ENCODE measurements at regions of chr2 and their contacts with region 1.

Region 1: DNA sequence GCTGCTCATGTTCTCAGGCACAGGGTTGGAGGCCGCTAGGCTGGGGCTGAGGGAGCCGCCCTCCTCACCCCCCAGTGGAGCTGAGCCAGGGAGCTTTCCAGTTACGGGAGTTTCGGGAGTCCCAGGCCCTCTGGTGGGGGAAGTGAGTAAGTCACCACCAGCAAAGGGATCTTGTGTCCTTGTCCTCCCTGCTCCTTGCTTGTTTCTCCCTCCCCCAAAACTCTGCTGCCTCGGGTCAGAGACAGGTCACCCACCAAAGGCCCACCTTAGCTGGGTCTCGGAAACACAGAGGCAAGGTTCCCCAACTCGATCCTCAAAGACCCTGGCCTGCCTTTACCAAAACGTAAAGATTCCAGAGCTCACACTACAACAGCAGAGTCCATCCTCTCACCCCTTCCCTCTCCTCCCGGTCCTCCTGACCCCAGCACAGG is 60.5 kb upstream of the POMC start:
- DNase-seq: peak; percentile 79
- ATAC-seq: peak; percentile 74
- H3K4me3 ChIP-seq: no peak overlapping the region
- H3K4me3 Mint-ChIP-seq: no peak overlapping the region
- H3K27ac ChIP-seq: no peak overlapping the region
- H3K27ac Mint-ChIP-seq: peak overlapping the region; percentile 15
- H3K4me1 ChIP-seq: peaks cover 7 to 14% of the 10 kb centered on the region in 2 donors
- H3K4me1 Mint-ChIP-seq: peaks cover 19% of the 10 kb centered on the region
- H3K27me3 ChIP-seq: no peaks in the 10 kb centered on the region
- H3K27me3 Mint-ChIP-seq: no peaks in the 10 kb centered on the region
- CTCF ChIP-seq: peak; percentile 63

Region 2: GRCh38 chr2:25197336-25198208 is 31.3 kb before region 1 on chr2:
- CTCF ChIA-PET with region 1: interaction called, 28 read pairs
- POLR2A ChIA-PET with region 1: no interaction called
- intact Hi-C with region 1: loop called (anchors 2 kb)
- DNase-seq: no peak
- ATAC-seq: no peak
- H3K4me3 ChIP-seq: no peak overlapping the region
- H3K4me3 Mint-ChIP-seq: no peak overlapping the region
- H3K27ac ChIP-seq: no peak overlapping the region
- H3K27ac Mint-ChIP-seq: no peak overlapping the region
- H3K4me1 ChIP-seq: peaks cover 6 to 14% of the 10 kb centered on the region in 2 donors
- H3K4me1 Mint-ChIP-seq: peaks cover 14% of the 10 kb centered on the region
- H3K27me3 ChIP-seq: peaks cover 0 to 6% (median 1%) of the 10 kb centered on the region in 4 experiments
- H3K27me3 Mint-ChIP-seq: no peaks in the 10 kb centered on the region
- CTCF ChIP-seq: no peak

Region 3: DNA sequence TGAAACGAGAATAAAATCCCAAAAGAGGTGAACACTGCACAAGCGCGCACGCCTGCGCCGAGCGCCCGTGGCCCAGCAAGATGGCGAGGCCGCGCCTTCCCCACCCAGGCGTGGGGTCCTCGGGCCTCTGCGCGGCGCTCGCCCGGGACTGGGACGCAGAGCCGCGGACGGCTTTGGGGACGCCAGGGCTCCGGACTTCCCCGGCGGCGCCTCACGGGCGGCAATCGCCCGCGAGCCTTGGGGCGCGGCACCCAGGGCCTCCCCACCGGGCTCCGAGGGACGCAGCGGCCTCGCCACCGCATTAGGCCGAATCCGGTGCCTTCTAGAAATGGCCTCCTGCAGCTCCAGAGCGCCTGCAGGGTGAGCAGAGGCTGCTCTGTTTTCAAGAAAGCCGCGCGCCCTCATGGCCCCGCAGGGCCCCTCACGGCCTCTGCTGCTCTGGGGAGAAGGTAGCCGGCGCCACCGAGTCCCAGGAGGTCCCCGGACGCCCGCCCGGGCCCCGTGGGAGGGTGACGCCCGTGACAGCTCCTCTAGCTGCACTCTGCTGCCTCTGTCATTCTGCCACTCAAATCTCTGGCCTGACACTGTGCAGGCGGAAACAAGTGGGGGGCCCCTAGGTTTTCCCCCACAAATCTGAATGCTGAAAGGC is 24.5 kb before region 1 on chr2:
- CTCF ChIA-PET with region 1: interaction called, 25 read pairs
- POLR2A ChIA-PET with region 1: no interaction called
- intact Hi-C with region 1: no loop called
- DNase-seq: peak; percentile 76
- ATAC-seq: peak; percentile 89
- H3K4me3 ChIP-seq: peak overlapping the region in 4 of 5 experiments; percentile 28 to 55 (median 43)
- H3K4me3 Mint-ChIP-seq: peak overlapping the region; percentile 34
- H3K27ac ChIP-seq: peak overlapping the region in 1 of 2 donors; percentile 16
- H3K27ac Mint-ChIP-seq: no peak overlapping the region
- H3K4me1 ChIP-seq: peaks cover 44 to 53% of the 10 kb centered on the region in 2 donors
- H3K4me1 Mint-ChIP-seq: peaks cover 45% of the 10 kb centered on the region
- H3K27me3 ChIP-seq: no peaks in the 10 kb centered on the region
- H3K27me3 Mint-ChIP-seq: no peaks in the 10 kb centered on the region
- CTCF ChIP-seq: peak; percentile 11

Region 4: DNA sequence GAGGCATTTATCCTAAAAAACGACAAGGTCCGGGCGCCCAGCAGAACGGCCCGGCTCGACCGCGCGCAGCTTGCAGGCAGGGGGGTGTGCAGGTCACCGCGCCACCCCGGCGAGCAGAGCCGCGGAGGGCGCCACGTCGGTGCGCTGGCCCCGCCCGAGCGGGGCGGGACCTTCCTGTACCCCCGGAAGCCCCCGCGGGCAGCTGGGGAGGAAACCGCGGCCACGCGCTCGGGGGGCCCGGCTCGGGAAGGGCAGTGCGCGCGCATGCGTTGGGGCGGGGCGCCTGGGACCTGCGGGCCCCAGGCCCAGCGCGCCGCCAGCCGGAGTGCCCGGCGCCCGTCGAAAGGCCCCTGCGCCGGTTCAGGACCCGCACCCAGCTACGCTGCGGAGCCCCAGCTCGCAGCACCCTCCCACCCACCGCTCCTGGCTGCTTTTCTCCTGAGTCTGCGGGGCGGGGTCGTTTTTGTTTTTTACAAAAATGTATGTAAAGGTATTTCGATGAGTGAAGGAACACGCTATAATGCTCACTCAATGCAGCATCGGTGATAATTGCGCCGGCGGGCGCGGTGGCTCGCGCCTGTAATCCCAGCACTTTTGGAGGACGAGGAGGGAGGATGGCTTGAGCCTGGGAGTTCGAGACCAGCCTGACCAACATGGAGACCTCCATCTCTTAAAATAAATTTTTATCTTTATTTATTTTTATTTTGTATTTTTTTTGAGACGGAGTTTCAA is 12.7 kb before region 1 on chr2:
- CTCF ChIA-PET with region 1: interaction called, 12 read pairs
- POLR2A ChIA-PET with region 1: interaction called, 3 read pairs
- intact Hi-C with region 1: loop called (anchors 2 kb)
- DNase-seq: peak; percentile 90
- ATAC-seq: peak; percentile 94
- H3K4me3 ChIP-seq: peak overlapping the region; percentile 45 to 71 (median 61)
- H3K4me3 Mint-ChIP-seq: peak overlapping the region; percentile 77
- H3K27ac ChIP-seq: peak overlapping the region; percentile 50 to 68
- H3K27ac Mint-ChIP-seq: peak overlapping the region; percentile 83
- H3K4me1 ChIP-seq: peaks cover 8 to 29% of the 10 kb centered on the region in 2 donors
- H3K4me1 Mint-ChIP-seq: peaks cover 30% of the 10 kb centered on the region
- H3K27me3 ChIP-seq: no peaks in the 10 kb centered on the region
- H3K27me3 Mint-ChIP-seq: no peaks in the 10 kb centered on the region
- CTCF ChIP-seq: no peak

Region 5: DNA sequence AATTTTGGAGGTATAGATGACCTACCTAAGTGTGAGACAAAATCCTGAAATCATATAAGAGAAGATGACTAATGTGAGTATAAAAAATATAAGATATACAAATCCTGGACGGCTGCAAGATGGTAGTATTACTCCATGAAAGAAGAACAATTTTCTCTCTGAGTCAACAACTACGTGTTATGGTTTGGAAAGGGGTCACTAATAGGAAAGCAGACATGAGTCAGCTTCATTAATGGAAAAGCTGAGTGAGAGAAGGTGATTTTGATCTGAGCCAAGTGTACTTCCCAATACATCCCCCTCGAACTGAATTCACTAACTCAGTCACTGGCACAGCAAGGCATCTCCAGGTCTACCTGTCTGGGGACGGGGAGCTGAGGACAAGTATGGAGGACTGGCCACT is 1097.0 kb after region 1 on chr2:
- CTCF ChIA-PET with region 1: no interaction called
- POLR2A ChIA-PET with region 1: no interaction called
- intact Hi-C with region 1: no loop called
- DNase-seq: no peak
- ATAC-seq: no peak
- H3K4me3 ChIP-seq: no peak overlapping the region
- H3K4me3 Mint-ChIP-seq: no peak overlapping the region
- H3K27ac ChIP-seq: no peak overlapping the region
- H3K27ac Mint-ChIP-seq: no peak overlapping the region
- H3K4me1 ChIP-seq: peaks cover 2 to 5% of the 10 kb centered on the region in 2 donors
- H3K4me1 Mint-ChIP-seq: peaks cover 6% of the 10 kb centered on the region
- H3K27me3 ChIP-seq: no peaks in the 10 kb centered on the region
- H3K27me3 Mint-ChIP-seq: no peaks in the 10 kb centered on the region
- CTCF ChIP-seq: no peak

Measured in B cell (primary cell).